Activated CD4-positive, alpha-beta memory T cell treated with anti-CD3 and anti-CD28 coated beads for 36 hours (primary cell): ENCODE measurements at regions of chr5 and their contacts with region 1.

Region 1: GRCh38 chr5:65481635-65482295 is at the start of gene ADAMTS6:
- DNase-seq: peak; percentile 84
- H3K4me3 Mint-ChIP-seq: no peak within 1 kb of the TSS
- H3K27ac Mint-ChIP-seq: peak within 1 kb of the TSS; percentile 50
- H3K4me1 Mint-ChIP-seq: peaks cover 8% of the 10 kb centered on the region
- H3K27me3 Mint-ChIP-seq: peaks cover 2% of the 10 kb centered on the region
- total RNA-seq, gene ADAMTS6: 0.44 to 0.45 TPM

Region 2: DNA sequence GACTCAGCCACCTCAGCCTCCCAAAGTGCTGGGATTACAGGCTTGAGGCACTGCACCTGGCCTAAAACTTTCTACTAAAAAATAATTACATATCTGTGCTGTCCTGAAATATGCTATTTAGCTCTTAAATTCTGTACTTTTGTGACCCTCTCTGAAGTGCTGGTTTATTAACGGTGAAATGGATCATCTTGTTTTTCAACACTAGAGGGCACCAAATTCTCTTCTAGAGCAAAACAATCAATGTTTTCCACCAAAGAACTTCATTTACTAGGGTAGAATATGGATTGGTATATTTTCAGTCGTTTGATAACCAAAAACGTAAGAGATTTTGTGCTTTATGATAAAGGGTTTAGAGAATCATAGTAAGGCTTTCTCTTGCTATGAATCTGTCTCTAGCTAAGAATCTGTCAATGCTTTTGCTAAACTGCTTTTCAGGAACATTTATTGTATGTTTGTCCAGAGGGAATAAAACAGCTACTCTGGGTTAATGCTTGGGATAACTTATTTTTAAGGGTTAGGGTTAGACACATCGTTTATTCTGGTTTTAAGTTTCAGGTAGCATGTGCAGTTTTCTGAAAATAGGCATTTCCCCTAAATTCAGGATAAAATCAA is 1252.5 kb before region 1 on chr5:
- CTCF ChIA-PET with region 1: no interaction called
- POLR2A ChIA-PET with region 1: no interaction called
- intact Hi-C with region 1: loop called (anchors 10 kb)
- DNase-seq: no peak
- H3K4me3 Mint-ChIP-seq: no peak overlapping the region
- H3K27ac Mint-ChIP-seq: no peak overlapping the region
- H3K4me1 Mint-ChIP-seq: no peaks in the 10 kb centered on the region
- H3K27me3 Mint-ChIP-seq: no peaks in the 10 kb centered on the region

Region 3: DNA sequence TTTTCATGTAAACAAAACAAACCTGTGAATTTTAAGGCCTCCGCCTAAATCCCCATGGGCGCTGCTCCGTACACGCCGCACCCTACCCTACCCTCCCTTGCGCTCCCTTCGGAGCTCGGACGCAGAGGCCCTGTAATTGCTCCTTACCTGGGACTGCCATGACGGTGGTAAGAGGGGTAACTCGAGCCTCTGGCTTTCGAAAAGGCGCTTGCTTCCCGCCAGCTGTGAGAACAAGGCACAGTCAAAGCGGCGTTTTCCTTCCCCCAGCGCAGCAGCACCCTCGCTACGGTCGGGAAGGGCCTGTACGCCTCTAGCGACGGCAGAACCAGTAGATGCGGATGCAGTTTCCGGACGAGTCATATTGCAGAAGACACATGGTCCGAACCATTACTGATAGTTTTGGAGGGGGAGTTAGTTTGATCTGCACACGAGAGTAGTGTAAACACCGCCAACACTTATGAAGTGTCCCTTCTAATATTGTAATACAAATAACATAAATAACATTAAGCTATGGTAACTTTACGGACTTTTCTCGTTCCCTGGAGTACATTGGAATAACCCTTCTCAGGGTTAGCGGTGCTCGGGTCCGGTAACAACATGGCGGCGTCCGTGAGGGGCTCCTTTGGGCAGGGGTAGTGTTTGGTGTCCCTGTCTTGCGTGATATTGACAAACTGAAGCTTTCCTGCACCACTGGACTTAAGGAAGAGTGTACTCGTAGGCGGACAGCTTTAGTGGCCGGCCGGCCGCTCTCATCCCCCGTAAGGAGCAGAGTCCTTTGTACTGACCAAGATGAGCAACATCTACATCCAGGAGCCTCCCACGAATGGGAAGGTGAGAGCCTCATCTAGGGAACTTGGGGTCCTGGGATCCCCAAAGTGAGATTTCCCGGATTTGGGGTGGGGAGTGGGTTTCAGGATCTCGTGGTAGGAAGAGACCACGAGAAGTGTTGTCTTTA is 713.1 kb before region 1 on chr5 and contains the starts of genes CWC27 and SREK1IP1:
- CTCF ChIA-PET with region 1: interaction called, 3 read pairs
- POLR2A ChIA-PET with region 1: no interaction called
- intact Hi-C with region 1: loop called (anchors 2 kb)
- DNase-seq: peak; percentile 89
- H3K4me3 Mint-ChIP-seq: peak within 1 kb of the TSS; percentile 100
- H3K27ac Mint-ChIP-seq: peak within 1 kb of the TSS; percentile 94
- H3K4me1 Mint-ChIP-seq: peaks cover 43% of the 10 kb centered on the region
- H3K27me3 Mint-ChIP-seq: no peaks in the 10 kb centered on the region
- total RNA-seq, gene CWC27: 31.4 to 33.7 TPM
- total RNA-seq, gene SREK1IP1: 20.2 to 24.3 TPM

Region 4: DNA sequence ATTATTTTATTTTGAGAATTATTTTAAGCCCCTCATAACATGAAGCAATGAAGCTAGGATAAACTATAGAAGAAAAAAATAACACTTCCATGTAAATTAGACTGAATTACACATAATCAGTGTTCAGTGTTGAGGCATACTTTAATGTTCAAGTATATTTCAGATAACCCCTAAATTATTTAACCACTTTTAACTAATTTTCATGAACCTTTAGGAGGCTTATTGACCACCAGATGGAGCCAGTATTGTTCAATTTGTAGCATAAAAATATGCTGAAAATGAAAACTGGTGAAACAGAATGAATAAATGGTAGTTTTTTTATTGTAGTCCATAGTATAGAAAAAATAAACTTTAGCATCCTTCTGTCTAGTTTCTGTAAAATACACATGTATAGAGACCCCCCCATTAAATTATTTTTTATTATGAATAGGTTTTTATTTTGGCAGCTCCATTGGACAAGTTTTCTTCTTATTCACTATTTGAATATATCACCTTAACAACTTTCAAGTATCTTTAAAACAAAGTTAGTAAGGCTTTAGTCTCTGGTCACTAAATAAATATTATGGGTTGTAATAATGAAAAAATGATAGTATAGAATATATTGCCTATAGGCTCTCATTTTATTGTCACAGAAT is 522.9 kb before region 1 on chr5:
- CTCF ChIA-PET with region 1: interaction called, 12 read pairs
- POLR2A ChIA-PET with region 1: no interaction called
- intact Hi-C with region 1: loop called (anchors 1 kb)
- DNase-seq: no peak
- H3K4me3 Mint-ChIP-seq: no peak overlapping the region
- H3K27ac Mint-ChIP-seq: no peak overlapping the region
- H3K4me1 Mint-ChIP-seq: no peaks in the 10 kb centered on the region
- H3K27me3 Mint-ChIP-seq: no peaks in the 10 kb centered on the region

Region 5: GRCh38 chr5:65076251-65076869 is 405.4 kb before region 1 on chr5:
- CTCF ChIA-PET with region 1: interaction called, 6 read pairs
- POLR2A ChIA-PET with region 1: no interaction called
- intact Hi-C with region 1: loop called (anchors 1 kb)
- DNase-seq: peak; percentile 67
- H3K4me3 Mint-ChIP-seq: no peak overlapping the region
- H3K27ac Mint-ChIP-seq: no peak overlapping the region
- H3K4me1 Mint-ChIP-seq: peaks cover 5% of the 10 kb centered on the region
- H3K27me3 Mint-ChIP-seq: peaks cover 7% of the 10 kb centered on the region

Region 6: DNA sequence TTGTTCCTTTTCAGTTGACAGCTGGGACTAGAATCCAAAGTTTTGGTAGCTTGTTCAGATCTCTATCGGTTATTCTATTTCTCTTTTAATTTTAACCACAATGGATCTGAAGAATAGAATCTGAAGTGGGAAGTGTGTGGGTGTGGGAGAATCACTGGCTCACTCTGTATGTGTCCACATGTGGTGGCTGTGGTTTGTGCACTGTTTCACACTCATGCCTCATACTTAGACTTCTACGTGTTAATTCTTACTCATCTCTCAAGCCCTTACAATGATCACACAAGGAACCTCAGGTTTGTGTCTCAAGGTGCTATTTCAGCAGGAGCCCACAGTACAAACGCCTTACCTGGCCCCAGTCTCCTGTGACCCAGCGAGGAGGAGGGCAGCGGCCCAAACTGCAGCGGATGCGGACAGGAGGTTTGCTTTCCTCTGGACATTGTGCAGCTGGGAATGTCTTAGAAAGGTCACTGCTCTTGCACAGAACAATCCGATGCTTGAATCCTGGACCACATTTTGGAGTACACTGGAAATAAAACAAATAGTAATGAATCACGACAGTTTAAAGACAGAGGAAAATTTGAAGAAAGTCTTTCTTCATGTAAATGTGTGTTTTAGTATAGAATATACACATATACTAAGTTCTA is 309.2 kb before region 1 on chr5:
- CTCF ChIA-PET with region 1: interaction called, 3 read pairs
- POLR2A ChIA-PET with region 1: no interaction called
- intact Hi-C with region 1: loop called (anchors 2 kb)
- DNase-seq: peak; percentile 80
- H3K4me3 Mint-ChIP-seq: no peak overlapping the region
- H3K27ac Mint-ChIP-seq: no peak overlapping the region
- H3K4me1 Mint-ChIP-seq: peaks cover 6% of the 10 kb centered on the region
- H3K27me3 Mint-ChIP-seq: peaks cover 30% of the 10 kb centered on the region

Region 7: DNA sequence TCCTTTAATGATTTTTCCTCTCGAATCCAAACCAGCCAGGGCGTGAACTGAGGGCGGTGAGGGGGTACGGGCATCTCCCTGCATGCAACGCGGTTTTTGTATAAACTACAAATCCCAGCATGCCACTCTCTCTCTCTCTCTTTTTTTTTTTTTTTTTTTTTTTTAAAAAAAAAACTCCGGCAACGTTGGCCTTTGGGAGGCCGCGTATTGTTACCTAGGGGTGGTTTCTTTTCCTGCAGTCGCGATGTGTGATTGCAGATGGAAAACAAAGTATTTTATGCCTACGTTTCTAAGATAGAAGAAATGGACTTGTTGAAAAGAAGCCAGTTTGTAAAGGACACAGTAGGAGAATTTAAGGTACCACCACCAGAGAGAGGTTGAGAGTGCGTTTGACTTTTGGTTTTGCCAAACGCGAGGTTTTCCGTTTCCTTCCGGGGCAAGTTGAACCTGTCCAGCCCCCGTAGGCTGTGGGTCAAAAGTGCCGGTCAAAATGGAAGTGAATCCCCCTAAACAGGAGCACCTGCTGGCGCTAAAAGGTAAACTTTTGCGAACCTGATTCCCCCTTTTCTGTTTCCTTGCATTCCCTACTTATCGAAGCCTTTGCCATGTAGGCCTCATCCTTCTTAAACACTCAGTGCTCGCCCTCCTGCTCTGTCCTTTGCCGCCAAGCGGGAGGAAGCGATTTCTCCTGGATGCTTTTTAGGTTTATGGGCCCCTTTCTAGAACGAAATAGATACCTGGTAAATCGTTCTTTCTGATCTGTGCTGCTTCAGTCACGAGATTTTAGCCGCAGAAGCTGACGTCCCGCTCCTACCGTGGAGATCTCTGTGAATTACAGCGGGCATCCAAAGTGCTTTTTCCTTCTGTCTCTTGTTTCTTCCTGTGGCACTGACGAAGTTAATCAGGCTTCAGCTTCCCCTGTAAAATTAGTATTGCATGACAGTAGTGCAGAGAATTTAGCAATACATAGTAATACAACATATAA is 143.1 kb after region 1 on chr5 and contains the starts of genes SHLD3 and TRAPPC13:
- CTCF ChIA-PET with region 1: no interaction called
- POLR2A ChIA-PET with region 1: no interaction called
- intact Hi-C with region 1: loop called (anchors 1 kb)
- DNase-seq: peak; percentile 89
- H3K4me3 Mint-ChIP-seq: peak within 1 kb of the TSS; percentile 96
- H3K27ac Mint-ChIP-seq: peak within 1 kb of the TSS; percentile 96
- H3K4me1 Mint-ChIP-seq: peaks cover 39% of the 10 kb centered on the region
- H3K27me3 Mint-ChIP-seq: no peaks in the 10 kb centered on the region
- total RNA-seq, gene SHLD3: 2.6 to 3.1 TPM
- total RNA-seq, gene TRAPPC13: 22.4 to 23.2 TPM